ENCODE measurements at regions of chr6 and their contacts with region 1.

Region 1: DNA sequence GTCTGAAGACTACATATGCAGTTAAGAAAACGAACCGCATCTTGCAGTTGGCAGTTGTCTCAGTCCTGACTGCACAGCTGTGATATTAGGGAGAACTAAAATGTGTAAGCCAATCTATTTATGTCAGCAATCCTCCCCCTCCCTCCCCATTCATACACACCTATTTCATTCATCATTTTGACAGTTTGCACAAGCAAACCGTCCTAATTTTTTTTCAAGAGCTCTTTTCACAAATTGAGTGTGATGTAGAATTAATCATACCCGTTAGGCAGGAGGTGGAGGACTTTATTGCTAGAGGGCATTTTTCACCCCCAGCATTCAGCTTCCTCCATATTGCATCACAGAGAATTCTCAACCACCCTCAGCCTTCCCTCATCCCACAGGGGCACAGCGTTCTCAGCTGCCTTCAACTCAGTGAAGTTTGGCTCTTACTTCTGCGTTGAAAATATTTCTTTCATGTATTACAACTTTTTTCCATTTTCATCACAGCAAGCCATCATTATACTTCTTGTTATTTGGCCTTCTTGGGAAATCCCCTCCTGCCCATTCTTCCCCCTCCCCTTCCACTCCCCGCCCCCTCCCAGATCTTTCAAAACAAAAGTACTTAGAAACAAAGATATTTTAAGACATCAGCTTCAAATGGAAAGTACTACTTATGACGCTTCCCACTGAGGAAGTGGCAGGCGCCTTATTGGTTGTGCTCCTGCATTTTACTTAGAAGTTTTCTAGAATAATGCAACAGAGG is 37.5 kb downstream of the NOX3 start:
- DNase-seq: peak; percentile 85
- H3K4me3 Mint-ChIP-seq: peak overlapping the region; percentile 82
- H3K27ac Mint-ChIP-seq: peak overlapping the region; percentile 100
- H3K4me1 Mint-ChIP-seq: peaks cover 37% of the 10 kb centered on the region
- H3K27me3 Mint-ChIP-seq: no peaks in the 10 kb centered on the region

Region 2: GRCh38 chr6:155188707-155189496 is 229.3 kb before region 1 on chr6:
- intact Hi-C with region 1: loop called (anchors 1 kb)
- DNase-seq: no peak
- H3K4me3 Mint-ChIP-seq: peak overlapping the region; percentile 16
- H3K27ac Mint-ChIP-seq: peak overlapping the region; percentile 91
- H3K4me1 Mint-ChIP-seq: peaks cover 43% of the 10 kb centered on the region
- H3K27me3 Mint-ChIP-seq: no peaks in the 10 kb centered on the region

Region 3: DNA sequence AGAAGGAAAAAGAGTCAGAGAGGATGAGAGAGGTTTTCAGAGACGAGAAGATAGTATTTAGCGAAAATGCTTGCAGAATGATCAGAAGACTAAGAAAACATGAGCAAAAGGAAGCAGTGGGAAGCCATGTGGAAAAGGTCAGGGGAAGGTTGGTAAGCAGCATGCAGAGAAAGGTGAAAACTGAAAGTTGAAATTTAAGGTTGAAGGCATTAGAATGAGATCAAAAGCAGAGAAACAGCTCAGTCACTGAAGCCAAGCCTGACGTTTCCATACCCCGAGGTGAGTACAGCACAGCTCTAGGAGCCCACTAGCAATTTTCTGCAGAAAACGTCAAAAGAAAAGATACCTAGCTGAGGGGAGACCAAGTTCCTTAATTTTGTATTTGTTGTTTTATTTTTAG is 84.8 kb before region 1 on chr6:
- intact Hi-C with region 1: loop called (anchors 1 kb)
- DNase-seq: peak; percentile 65
- H3K4me3 Mint-ChIP-seq: peak overlapping the region; percentile 61
- H3K27ac Mint-ChIP-seq: peak overlapping the region; percentile 72
- H3K4me1 Mint-ChIP-seq: peaks cover 42% of the 10 kb centered on the region
- H3K27me3 Mint-ChIP-seq: no peaks in the 10 kb centered on the region

Region 4: DNA sequence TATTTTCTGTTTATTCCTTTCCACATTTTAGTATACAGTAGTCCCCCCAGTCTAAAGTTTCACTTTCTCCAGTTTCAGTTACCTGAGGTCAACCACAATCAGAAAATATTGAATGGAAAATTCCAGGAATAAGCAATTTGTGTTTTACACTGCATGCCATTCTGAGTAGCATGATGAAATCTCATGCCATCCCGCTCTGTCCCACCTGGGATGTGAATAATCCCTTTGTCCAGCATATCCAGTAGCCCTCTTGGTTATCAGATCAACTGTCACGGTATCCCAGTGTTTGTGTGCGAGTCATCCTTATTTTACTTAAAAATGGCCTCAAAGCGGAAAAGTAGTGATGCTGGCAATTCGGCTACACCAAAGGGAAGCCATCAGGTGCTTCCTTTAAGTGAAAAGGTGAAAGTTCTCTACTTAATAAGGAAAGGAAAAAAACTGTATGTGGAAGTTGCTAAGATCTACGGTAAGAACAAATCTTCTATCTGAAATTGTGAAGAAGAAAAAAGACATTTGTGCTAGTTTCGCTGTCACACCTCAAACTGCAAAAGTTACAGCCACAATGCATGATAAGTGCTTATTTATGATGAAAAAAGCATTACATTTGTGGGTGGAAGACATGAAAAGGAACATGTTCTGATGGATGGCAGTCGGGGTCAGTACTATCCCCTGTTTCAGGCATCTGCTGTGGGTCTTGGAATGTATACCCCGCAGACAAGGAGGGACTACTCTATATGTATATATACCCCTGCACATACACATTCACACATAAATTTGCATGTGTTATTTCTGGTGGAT is 26.1 kb after region 1 on chr6:
- intact Hi-C with region 1: loop called (anchors 2 kb)
- DNase-seq: no peak
- H3K4me3 Mint-ChIP-seq: no peak overlapping the region
- H3K27ac Mint-ChIP-seq: peak overlapping the region; percentile 5
- H3K4me1 Mint-ChIP-seq: peaks cover 18% of the 10 kb centered on the region
- H3K27me3 Mint-ChIP-seq: no peaks in the 10 kb centered on the region

Region 5: DNA sequence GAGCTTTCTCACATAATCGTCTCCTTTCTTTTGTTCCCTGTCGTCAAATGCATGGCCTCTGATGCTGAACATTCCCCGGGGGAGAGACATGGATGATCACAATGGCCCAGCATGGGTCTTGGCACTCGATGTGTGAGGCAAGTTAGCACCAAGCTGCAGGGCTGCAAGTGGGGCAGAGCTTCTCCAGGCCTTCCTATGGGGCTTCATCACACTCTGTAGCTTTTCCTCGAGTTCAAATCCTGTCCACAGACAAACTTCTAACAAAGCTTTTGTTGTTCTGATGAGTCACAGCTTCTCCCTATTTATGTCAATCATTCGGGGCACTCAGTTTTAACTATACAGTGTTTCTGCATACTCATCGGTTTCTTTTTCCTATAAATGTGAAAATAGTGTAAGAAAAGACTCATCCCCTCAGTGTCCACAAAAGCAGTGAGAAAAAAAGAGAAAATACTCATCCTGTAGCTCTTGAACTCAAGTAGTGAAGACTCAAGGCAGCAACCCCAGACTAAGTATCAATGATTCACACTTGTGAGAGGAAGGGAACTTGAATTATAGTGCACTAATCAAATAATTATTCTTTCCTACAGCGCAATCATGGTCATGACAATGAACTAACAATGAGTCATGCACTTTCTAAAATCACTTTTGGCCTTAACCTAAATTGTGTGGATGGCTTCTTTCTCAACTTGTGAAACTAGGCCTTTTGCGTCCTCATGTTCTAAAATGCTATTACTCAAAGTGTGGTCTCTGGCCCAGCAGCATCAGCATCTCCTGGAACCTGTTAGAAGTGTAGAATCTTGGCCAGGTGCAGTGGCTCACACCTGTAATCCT is 105.8 kb after region 1 on chr6:
- intact Hi-C with region 1: loop called (anchors 1 kb)
- DNase-seq: no peak
- H3K4me3 Mint-ChIP-seq: no peak overlapping the region
- H3K27ac Mint-ChIP-seq: peak overlapping the region; percentile 68
- H3K4me1 Mint-ChIP-seq: peaks cover 15% of the 10 kb centered on the region
- H3K27me3 Mint-ChIP-seq: no peaks in the 10 kb centered on the region